ENCODE measurements at regions of chrX and their contacts with region 1.

Region 1: DNA sequence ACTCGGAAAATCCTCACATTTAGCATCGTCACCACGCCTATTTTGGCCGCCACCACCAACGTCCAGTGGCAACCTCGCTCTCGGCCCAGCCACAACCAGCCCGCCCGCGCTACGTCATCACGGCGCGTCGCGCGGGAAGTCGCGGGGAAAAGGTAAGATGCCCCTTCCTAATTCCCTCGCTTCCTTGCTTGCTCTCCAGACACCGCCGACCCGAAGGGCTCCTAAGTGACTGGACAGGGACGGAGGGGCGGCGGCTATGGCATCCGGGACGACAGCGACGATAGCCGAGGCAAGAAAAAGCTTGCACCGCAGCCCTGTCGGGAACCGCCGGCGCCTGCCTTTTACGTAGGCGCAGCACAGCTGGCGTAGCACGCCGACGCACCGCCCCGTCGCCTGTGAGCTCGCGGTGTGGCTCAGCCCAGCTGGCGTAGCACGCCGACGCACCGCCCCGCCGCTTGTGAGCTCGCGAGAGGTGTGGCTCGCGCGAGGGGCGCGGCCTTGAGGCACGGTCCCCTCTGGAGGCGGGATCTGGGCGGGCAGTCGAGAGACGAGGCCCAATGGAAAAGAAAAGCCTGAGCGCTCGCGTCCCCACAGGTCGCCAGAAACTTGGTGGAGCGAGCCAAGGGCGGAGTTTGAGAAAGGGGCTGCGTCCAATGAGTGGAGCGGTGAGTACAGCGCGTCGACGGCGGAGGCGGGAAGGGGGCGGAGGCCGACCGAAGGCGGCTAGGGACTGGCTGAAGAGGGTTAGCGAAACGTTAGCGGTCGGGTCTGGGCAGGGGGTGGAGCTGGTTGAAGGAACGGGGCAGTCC is at the start of gene HDAC6:
- DNase-seq: peak; percentile 93 to 98
- H3K4me3 ChIP-seq: peak within 1 kb of the TSS; percentile 68 to 73
- H3K27ac ChIP-seq: peak within 1 kb of the TSS; percentile 96 to 97
- H3K4me1 ChIP-seq: no peaks in the 10 kb centered on the region
- H3K27me3 ChIP-seq: no peaks in the 10 kb centered on the region
- CTCF ChIP-seq: no peak
- total RNA-seq, gene HDAC6: 157 TPM

Region 2: GRCh38 chrX:48539345-48540027 is 262.0 kb before region 1 on chrX and contains the start of gene TBC1D25:
- intact Hi-C with region 1: loop called (anchors 10 kb)
- DNase-seq: peak; percentile 93 to 98
- H3K4me3 ChIP-seq: peak within 1 kb of the TSS; percentile 53 to 78
- H3K27ac ChIP-seq: peak within 1 kb of the TSS; percentile 79 to 87
- H3K4me1 ChIP-seq: no peaks in the 10 kb centered on the region
- H3K27me3 ChIP-seq: no peaks in the 10 kb centered on the region
- CTCF ChIP-seq: peak; percentile 20 to 55 (median 43)
- total RNA-seq, gene TBC1D25: 8.2 TPM

Region 3: DNA sequence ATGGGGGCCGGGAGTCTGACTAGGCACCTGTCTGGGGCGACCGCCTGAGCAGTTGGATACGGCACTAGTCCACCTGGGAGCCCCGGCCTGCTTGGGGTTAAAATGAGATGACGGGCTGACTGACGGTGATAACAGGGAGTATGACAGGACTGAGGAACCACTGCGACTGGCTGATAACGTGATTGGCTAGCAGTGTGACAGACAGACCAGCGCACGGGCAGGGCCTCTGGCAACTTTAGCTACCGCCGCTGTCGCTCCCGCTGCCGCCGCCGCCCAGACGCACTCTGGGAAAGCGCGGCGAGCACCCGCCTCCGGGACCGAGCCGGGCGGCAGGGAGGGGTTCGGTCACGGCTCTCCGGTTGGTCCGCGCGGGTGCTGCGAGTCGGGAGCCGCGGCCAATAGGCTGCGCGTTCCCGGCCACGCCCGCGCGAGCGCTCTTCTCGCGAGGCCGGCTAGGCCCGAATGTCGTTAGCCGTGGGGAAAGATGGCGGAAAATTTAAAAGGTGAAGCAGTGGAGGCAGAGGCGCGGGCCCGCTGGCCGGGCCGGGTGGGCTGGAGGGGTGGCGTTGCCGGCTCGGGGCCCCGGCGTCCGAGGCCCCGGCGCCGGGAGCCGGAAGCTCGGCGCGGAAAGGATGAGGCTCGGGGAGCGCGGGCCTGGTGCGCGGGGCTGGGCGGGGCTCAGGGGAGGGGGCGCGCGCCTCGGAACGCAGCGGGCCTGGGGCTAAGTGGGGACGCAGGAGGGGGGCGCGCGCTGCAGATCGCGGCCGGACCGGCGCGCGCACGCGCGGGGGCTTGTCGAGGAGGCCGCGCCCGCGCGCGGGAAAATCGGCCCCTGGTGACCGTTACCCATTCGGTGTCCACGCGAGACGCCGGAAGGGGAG is 104.9 kb before region 1 on chrX and contains the start of gene SUV39H1:
- intact Hi-C with region 1: loop called (anchors 2 kb)
- DNase-seq: peak; percentile 47 to 93
- H3K4me3 ChIP-seq: peak within 1 kb of the TSS; percentile 77 to 88
- H3K27ac ChIP-seq: peak within 1 kb of the TSS; percentile 87 to 92
- H3K4me1 ChIP-seq: no peaks in the 10 kb centered on the region
- H3K27me3 ChIP-seq: no peaks in the 10 kb centered on the region
- CTCF ChIP-seq: no peak
- total RNA-seq, gene SUV39H1: 0.21 TPM

Region 4: DNA sequence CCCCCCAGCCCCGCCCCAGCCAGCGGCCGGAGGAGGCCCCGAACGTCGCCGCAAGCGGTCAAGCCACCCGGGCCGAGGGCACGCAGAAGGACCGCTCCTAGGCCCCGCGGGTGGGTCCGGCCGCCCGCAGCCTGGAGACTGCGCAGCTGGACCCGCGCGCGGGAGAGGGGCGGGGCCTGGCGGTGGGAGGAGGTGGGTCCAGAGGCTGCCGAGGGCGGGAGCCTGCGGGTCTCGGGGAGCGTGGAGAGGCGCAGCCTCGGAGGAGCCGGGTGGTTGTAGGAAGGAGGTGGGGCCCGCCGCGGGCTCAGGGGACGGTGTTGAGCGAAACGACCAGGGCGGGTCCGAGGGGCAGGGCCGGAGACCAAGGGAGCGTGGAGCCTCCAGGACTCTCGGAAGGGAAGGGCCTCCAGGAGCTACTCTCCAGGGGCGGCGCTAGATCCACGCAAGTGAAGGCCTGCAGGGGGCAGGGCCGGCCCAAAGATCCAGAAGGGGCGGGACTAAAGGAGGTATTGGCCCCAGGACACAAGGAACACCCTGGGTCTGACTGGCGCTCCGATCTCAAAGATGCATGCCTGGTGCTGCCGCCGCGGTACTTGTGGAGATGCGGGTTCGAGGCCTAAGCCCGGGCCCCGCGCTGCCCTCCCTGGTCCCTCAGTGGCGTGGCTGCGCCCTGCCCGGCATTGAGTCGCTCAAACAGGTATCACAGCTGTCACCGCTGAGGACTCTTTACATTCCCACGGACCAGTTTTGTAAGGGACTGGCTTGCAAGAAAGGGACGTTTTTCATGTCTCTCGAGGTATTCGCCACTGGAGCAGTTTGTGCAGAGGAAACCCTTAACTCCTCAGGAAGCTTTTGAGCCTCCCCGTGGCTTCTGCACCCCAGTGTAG is 90.2 kb after region 1 on chrX:
- intact Hi-C with region 1: loop called (anchors 2 kb)
- DNase-seq: peak; percentile 70 to 94
- H3K4me3 ChIP-seq: peak overlapping the region; percentile 61 to 63
- H3K27ac ChIP-seq: peak overlapping the region; percentile 60 to 74
- H3K4me1 ChIP-seq: peaks cover 0 to 6% of the 10 kb centered on the region in 2 donors
- H3K27me3 ChIP-seq: no peaks in the 10 kb centered on the region
- CTCF ChIP-seq: peak; percentile 40 to 54 (median 53)

Region 5: DNA sequence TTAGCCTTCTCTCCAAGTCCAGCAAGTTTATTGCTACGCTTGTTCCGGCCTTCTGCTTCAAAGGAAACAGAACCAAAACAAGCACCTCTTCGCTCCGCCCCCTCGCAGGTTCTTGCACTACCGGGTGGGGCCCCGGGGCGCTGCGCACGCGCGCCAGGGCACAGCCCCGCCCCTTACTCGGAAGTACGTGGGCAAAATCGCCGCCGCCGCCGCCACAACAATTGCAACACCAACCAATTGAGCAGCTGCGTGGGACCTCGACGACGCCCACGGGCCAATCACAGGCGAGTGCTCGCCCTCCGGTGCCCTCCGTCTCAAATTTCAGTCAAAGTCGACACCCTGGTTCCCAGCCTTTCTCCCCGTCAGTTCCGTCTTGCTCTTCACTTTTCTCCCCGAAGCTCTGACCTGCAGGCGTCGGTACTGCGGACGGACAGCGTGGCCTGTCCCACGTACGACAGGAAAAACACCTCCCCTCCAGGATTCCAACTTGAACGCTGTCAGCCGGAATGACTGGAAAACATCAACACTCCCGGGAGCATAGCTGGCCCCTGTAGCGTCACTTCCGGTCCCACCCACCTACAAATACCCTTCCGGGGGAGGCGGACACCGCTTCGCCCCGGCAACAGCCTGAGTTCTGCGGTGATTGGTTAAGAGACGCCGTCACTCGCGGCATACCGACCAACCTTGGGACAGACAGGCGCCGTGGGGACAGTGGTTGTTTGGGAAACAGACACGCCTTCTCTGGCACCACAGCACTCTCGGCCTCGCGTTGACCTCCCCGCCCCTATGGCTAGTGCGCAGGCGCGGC is 156.5 kb after region 1 on chrX:
- intact Hi-C with region 1: loop called (anchors 5 kb)
- DNase-seq: peak; percentile 90 to 98
- H3K4me3 ChIP-seq: peak overlapping the region; percentile 58 to 86
- H3K27ac ChIP-seq: peak overlapping the region; percentile 90 to 92
- H3K4me1 ChIP-seq: no peaks in the 10 kb centered on the region
- H3K27me3 ChIP-seq: no peaks in the 10 kb centered on the region
- CTCF ChIP-seq: no peak

Measured in ascending aorta (tissue), 2 donors.